ENCODE measurements at regions of chr9 and their contacts with region 1.

Region 1: GRCh38 chr9:68619636-68620035 is 79.0 kb upstream of the TMEM252 start:
- DNase-seq: no peak
- H3K4me3 ChIP-seq: no peak overlapping the region
- H3K27ac ChIP-seq: no peak overlapping the region
- H3K4me1 ChIP-seq: no peaks in the 10 kb centered on the region
- H3K27me3 ChIP-seq: no peaks in the 10 kb centered on the region
- CTCF ChIP-seq: no peak

Region 2: GRCh38 chr9:68507130-68507805 is 112.4 kb before region 1 on chr9:
- dilution Hi-C with region 1: loop called (anchors 25 kb)
- DNase-seq: no peak
- H3K4me3 ChIP-seq: no peak overlapping the region
- H3K27ac ChIP-seq: no peak overlapping the region
- H3K4me1 ChIP-seq: no peaks in the 10 kb centered on the region
- H3K27me3 ChIP-seq: no peaks in the 10 kb centered on the region
- CTCF ChIP-seq: peak in 2 of 3 experiments; percentile 35 to 48

Region 3: DNA sequence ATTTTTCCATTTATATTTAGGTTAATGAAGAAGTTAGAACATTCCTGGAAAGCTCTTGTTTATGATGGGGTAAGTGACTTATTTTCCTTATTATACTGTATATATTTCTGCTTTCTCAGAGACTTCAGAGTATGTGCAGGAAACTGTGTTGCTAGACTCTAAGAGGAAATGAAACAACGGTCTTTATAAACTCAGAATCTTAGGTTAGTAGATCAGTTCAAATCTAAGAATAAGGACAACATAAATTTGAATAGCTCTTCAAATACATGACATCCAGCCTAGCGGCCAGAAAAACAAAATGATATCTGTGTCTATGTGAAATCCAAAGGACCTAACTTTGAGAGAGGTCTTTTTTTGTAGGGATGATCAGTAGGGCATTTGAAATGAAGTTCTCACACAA is 300.0 kb after region 1 on chr9:
- dilution Hi-C with region 1: no loop called
- DNase-seq: no peak
- H3K4me3 ChIP-seq: no peak overlapping the region
- H3K27ac ChIP-seq: no peak overlapping the region
- H3K4me1 ChIP-seq: no peaks in the 10 kb centered on the region
- H3K27me3 ChIP-seq: no peaks in the 10 kb centered on the region
- CTCF ChIP-seq: no peak

Region 4: GRCh38 chr9:68999393-69000105 is 379.9 kb after region 1 on chr9:
- dilution Hi-C with region 1: loop called (anchors 25 kb)
- DNase-seq: peak; percentile 21
- H3K4me3 ChIP-seq: no peak overlapping the region
- H3K27ac ChIP-seq: no peak overlapping the region
- H3K4me1 ChIP-seq: no peaks in the 10 kb centered on the region
- H3K27me3 ChIP-seq: no peaks in the 10 kb centered on the region
- CTCF ChIP-seq: peak; percentile 90 to 93 (median 91)

Measured in keratinocyte (primary cell).